Activated B cell treated with CpG ODN at 0.5 μM for 24 hours (primary cell): ENCODE measurements at regions of chr7 and their contacts with region 1.

Region 1: GRCh38 chr7:77536413-77537135 is 521 bp upstream of the PTPN12 start:
- DNase-seq: peak; percentile 96
- ATAC-seq: peak; percentile 88
- H3K4me3 Mint-ChIP-seq: peak overlapping the region; percentile 98
- H3K27ac Mint-ChIP-seq: peak overlapping the region; percentile 94
- H3K4me1 Mint-ChIP-seq: peaks cover 33% of the 10 kb centered on the region
- H3K27me3 Mint-ChIP-seq: no peaks in the 10 kb centered on the region
- CTCF ChIP-seq: no peak

Region 2: DNA sequence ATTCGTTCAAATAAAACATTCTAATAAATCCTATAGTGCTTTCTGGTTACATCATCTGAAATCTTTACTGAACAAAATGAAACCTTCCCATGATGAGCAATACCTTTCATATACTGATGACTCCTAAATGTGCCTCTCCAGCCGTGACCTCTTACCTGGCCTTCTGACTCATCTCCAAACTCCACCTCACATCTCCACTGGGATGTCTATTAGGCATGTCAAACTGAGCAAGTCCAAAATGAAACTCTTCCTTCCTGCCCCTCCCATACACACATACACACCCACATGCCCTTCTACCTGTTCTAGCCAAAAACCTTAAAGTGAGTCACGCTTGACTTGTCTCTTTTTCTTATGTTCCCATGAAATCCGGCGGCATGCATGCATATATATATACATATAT is 143.3 kb before region 1 on chr7:
- CTCF ChIA-PET with region 1: no interaction called
- POLR2A ChIA-PET with region 1: interaction called, 15 read pairs
- intact Hi-C with region 1: loop called (anchors 2 kb)
- DNase-seq: no peak
- ATAC-seq: peak; percentile 79
- H3K4me3 Mint-ChIP-seq: peak overlapping the region; percentile 21
- H3K27ac Mint-ChIP-seq: peak overlapping the region; percentile 85
- H3K4me1 Mint-ChIP-seq: peaks cover 48% of the 10 kb centered on the region
- H3K27me3 Mint-ChIP-seq: no peaks in the 10 kb centered on the region
- CTCF ChIP-seq: no peak

Region 3: DNA sequence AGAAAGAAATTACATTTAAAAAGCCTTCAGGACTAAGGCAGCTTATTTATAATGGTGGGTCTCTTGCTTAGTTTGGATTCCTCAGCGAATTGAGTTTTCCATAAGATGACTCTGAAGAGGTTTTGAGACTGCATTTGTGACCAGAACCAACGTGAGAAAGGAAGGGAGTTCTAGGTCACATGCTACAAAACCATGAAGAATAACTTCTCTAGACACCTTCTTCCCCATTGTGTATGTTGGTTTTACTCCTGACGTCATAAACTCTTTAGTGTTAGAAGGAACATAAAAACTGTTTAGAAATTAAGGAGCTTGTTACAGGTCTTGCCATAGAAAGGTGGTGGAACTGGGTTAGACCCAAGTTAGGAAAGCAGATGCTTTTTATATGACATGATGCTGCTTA is 11.6 kb after region 1 on chr7:
- CTCF ChIA-PET with region 1: no interaction called
- POLR2A ChIA-PET with region 1: interaction called, 4 read pairs
- intact Hi-C with region 1: loop called (anchors 1 kb)
- DNase-seq: no peak
- ATAC-seq: peak; percentile 37
- H3K4me3 Mint-ChIP-seq: no peak overlapping the region
- H3K27ac Mint-ChIP-seq: peak overlapping the region; percentile 31
- H3K4me1 Mint-ChIP-seq: peaks cover 38% of the 10 kb centered on the region
- H3K27me3 Mint-ChIP-seq: no peaks in the 10 kb centered on the region
- CTCF ChIP-seq: no peak

Region 4: DNA sequence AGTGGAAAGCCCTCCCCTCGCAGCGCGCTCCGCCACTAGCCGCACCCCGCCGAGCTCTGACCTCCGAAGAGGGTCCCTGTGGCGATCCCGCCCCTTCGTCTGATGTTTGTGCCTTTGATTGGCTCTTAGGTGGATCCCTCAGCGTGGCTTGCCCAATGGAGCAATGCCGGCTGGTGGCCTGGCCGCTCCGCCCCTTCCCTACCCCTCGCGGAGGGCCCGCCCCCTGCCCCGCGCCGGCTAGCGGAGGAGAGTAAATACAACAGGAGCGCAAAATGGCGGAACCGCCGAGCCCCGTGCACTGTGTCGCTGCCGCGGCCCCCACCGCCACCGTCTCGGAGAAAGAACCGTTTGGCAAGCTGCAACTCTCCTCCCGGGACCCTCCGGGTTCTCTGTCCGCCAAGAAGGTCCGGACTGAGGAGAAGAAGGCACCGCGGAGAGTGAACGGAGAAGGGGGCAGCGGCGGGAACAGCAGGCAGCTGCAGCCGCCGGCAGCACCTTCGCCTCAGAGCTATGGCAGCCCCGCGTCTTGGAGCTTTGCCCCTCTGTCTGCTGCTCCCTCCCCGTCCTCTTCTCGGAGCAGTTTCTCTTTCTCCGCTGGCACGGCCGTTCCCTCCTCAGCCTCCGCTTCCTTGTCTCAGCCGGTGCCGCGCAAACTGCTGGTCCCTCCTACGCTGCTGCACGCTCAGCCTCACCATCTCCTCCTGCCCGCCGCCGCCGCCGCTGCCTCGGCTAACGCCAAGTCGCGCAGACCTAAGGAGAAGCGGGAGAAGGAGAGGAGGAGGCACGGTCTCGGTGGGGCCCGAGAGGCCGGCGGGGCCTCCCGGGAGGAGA is 159.8 kb after region 1 on chr7 and contains the start of gene RSBN1L:
- CTCF ChIA-PET with region 1: no interaction called
- POLR2A ChIA-PET with region 1: interaction called, 8 read pairs
- intact Hi-C with region 1: loop called (anchors 1 kb)
- DNase-seq: peak; percentile 96
- ATAC-seq: peak; percentile 94
- H3K4me3 Mint-ChIP-seq: peak within 1 kb of the TSS; percentile 96
- H3K27ac Mint-ChIP-seq: peak within 1 kb of the TSS; percentile 93
- H3K4me1 Mint-ChIP-seq: peaks cover 54% of the 10 kb centered on the region
- H3K27me3 Mint-ChIP-seq: no peaks in the 10 kb centered on the region
- CTCF ChIP-seq: no peak
- total RNA-seq, gene RSBN1L: 24.5 and 25.9 TPM in 2 replicates